Stomach (tissue), 19 donors: ENCODE measurements at regions of chr1 and their contacts with region 1.

Region 1: DNA sequence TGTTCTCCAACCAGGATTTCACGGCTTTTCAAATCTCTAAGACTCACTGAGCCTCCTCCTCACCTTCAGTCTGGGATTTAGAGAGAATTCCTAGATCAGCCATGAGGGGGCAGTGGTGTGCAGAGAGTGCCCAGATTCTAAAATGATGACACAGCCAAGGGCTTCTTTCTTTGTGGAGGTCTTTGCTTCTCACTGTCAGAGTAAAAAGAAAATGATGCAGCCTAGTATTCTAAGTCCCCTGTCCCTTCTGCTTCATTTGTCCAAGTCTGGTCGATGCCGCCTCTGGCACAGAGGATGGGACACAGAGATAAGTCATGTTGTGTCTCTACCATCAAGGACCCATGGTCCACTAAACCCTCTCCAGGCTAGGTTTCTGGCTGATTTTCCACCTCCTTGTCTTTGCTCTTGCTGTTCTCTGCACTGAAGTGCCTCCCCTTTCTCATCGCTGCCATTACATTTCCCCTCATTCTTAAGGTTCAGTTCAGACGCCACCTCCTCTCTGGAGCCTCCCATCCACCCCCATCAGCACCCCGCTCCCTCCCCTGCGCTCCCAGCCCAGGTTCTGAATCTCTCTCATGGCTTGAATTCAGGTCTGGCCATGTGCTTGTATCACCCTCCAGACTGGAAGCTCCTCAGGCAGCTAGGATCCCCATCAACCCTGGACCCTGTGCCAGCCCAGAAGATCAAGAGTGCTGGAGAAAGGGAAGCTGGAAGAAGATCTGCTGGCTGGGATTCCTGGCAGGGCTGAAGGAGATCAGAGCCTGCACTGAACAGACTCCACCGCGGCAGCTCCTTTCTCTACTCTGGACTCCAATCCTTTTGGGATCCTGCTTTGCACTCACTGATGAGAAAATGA is 12.0 kb upstream of the TINAGL1 start:
- DNase-seq: peak in 1 of 2 donors; percentile 83
- H3K4me3 ChIP-seq: no peak overlapping the region
- H3K27ac ChIP-seq: peak overlapping the region in 1 of 5 donors; percentile 35
- H3K4me1 ChIP-seq: peaks cover 3 to 22% (median 10%) of the 10 kb centered on the region in 4 donors
- H3K27me3 ChIP-seq: peaks cover 0 to 28% (median 0%) of the 10 kb centered on the region in 3 donors
- CTCF ChIP-seq: peak in 5 of 7 experiments; percentile 73 to 90 (median 80)
- EP300 ChIP-seq: no peak
- POLR2A ChIP-seq: no peak

Region 2: GRCh38 chr1:31422505-31423319 is 141.7 kb before region 1 on chr1:
- intact Hi-C with region 1: no loop called
- DNase-seq: peak; percentile 80 to 92
- H3K4me3 ChIP-seq: no peak overlapping the region
- H3K27ac ChIP-seq: peak overlapping the region in 4 of 5 donors; percentile 36 to 61 (median 44)
- H3K4me1 ChIP-seq: peaks cover 0 to 36% (median 7%) of the 10 kb centered on the region in 4 donors
- H3K27me3 ChIP-seq: peaks cover 0 to 6% (median 0%) of the 10 kb centered on the region in 3 donors
- CTCF ChIP-seq: peak in 5 of 7 experiments; percentile 74 to 97 (median 93)
- EP300 ChIP-seq: no peak
- POLR2A ChIP-seq: no peak

Region 3: DNA sequence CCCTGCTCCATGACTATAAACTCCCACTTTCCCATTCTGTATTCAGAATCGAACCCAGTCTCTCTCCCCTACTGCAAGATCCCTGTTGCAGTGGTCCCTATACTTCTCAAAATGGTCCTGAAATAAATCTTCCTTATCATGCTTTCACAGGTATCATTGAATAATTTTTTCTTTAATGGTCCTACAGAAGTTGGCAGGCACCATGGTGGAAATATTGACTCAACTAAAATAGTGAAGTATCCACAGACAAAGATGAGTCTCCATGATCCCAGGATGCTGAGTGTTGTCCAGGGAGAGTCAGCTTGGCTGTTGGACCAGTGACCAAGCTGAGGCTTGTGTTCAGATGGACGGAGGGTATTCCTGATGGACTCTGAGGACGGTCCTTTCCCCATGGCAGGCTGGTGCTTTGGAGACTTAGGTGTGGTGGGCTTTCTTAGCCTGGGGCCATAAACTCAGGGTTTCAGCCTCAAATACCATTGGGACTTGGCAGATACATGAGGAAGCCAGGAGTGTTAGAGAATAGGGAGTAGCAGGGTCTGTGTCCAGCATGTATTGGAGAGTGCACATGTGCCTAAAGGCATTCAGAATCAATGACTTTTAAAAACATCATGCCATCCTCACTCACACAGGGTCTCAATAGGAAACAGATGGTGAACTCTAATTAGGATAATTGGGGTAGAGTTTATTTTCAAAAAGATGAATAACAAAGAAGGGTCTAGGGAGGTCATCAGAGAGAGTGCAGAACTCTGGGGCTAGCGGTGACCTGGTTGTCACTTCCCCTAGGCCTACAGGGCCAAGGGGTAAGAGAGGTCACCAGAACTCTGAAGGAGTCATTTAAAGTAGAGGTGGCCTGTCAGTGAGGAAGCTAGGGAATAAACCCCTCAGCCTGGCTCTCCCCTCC is 31.7 kb after region 1 on chr1:
- intact Hi-C with region 1: loop called (anchors 5 kb)
- DNase-seq: peak in 1 of 2 donors; percentile 4
- H3K4me3 ChIP-seq: no peak overlapping the region
- H3K27ac ChIP-seq: no peak overlapping the region
- H3K4me1 ChIP-seq: peaks cover 0 to 12% (median 5%) of the 10 kb centered on the region in 4 donors
- H3K27me3 ChIP-seq: peaks cover 0 to 2% (median 0%) of the 10 kb centered on the region in 3 donors
- CTCF ChIP-seq: no peak
- EP300 ChIP-seq: no peak
- POLR2A ChIP-seq: no peak